Prostate gland (tissue), 2 donors: ENCODE measurements at regions of chr15 and their contacts with region 1.

Region 1: DNA sequence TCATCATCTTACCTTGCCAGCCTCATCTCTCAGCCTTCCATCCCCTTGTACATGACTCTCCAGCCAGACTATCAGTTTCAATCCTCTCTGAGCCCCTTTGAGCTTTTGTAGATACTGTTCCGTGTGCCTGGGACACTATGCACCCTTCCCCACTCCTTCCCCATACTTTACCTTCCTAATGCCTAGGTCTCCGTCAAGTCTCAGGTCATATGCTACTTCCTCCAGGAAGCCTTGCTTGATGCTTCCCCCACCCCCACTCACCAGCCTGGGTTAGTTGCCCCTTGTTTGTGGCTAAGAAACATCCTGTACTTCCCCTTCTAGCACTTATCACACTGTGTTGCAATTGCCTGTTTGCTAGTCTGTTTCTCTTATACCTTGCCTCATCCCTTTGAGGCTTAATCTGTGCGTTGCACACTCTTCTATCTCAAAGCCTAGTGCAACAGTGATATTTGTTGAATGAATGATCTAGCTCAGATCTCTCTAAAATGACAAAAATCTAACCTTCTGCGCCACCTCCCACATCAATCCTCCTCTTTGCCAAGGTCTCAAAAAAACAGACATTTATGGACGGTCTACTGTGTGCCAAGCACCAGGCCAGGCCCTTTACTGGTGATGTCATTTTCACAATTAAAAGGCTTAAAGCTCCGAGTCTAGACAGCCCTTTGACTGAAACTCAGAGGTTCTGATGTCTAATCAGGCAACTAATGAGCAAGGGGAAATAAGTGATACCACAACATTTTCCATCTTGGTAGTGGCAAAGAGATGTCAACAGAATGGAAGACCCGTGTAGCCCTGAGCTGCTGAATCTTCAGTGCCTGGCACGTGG is 6.5 kb upstream of the USP3 start:
- DNase-seq: no peak
- H3K4me3 ChIP-seq: no peak overlapping the region
- H3K27ac ChIP-seq: peak overlapping the region; percentile 11 to 47
- H3K4me1 ChIP-seq: peaks cover 18% of the 10 kb centered on the region
- H3K27me3 ChIP-seq: no peaks in the 10 kb centered on the region
- CTCF ChIP-seq: no peak
- POLR2A ChIP-seq: no peak

Region 2: GRCh38 chr15:64067564-64068030 is 569.7 kb after region 1 on chr15:
- intact Hi-C with region 1: loop called (anchors 10 kb)
- DNase-seq: peak; percentile 57
- H3K4me3 ChIP-seq: no peak overlapping the region
- H3K27ac ChIP-seq: peak overlapping the region; percentile 44 to 49
- H3K4me1 ChIP-seq: peaks cover 11% of the 10 kb centered on the region
- H3K27me3 ChIP-seq: no peaks in the 10 kb centered on the region
- CTCF ChIP-seq: peak; percentile 74 to 89 (median 84)
- POLR2A ChIP-seq: no peak